Adrenal gland (tissue), 19 donors: ENCODE measurements at regions of chr6 and their contacts with region 1.

Region 1: GRCh38 chr6:133973109-133973971 is 20.3 kb downstream of the TBPL1 start:
- DNase-seq: no peak
- H3K4me3 ChIP-seq: no peak overlapping the region
- H3K27ac ChIP-seq: peak overlapping the region in 2 of 5 donors; percentile 14 to 33
- H3K4me1 ChIP-seq: peaks cover 8 to 17% of the 10 kb centered on the region in 2 donors
- H3K27me3 ChIP-seq: no peaks in the 10 kb centered on the region
- CTCF ChIP-seq: peak; percentile 68 to 87 (median 74)
- POLR2A ChIP-seq: no peak

Region 2: DNA sequence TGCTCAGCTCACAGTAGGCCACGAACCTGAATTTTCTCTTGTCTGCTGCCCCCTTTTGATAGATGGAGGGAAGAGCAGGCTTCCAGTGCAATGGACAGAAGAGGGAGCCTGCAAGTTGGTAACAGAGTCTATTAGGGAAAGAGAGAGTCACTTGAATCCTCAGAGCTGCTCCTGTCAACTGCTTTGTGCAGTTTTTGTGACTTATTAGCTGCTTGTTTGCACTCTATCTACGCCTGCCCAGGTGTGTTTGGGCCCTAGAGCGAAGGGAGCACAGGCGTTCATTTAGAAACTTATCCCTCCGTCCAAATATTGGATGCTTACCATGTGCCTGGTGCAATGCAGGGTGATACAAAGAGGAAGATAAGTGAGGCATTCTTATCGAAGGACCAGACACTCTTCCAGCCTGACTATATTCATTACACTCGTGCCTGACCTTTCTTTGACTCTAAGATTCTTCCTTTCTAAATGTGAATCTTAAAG is 90.7 kb after region 1 on chr6:
- intact Hi-C with region 1: loop called (anchors 5 kb)
- DNase-seq: peak; percentile 56 to 88 (median 67)
- H3K4me3 ChIP-seq: no peak overlapping the region
- H3K27ac ChIP-seq: no peak overlapping the region
- H3K4me1 ChIP-seq: peaks cover 0 to 2% of the 10 kb centered on the region in 2 donors
- H3K27me3 ChIP-seq: no peaks in the 10 kb centered on the region
- CTCF ChIP-seq: peak; percentile 66 to 83 (median 78)
- POLR2A ChIP-seq: no peak